Mammary epithelial cell (primary cell): ENCODE measurements at regions of chr21 and their contacts with region 1.

Region 1: GRCh38 chr21:40466893-40467501 is 380.0 kb downstream of the DSCAM start:
- DNase-seq: peak; percentile 8
- H3K4me3 ChIP-seq: no peak overlapping the region
- H3K27ac ChIP-seq: no peak overlapping the region
- H3K4me1 ChIP-seq: no peaks in the 10 kb centered on the region
- H3K27me3 ChIP-seq: no peaks in the 10 kb centered on the region
- CTCF ChIP-seq: peak; percentile 52 to 64

Region 2: GRCh38 chr21:40143822-40144525 is 323.0 kb before region 1 on chr21:
- CTCF ChIA-PET with region 1: no interaction called
- dilution Hi-C with region 1: no loop called
- in situ Hi-C with region 1: no loop called
- intact Hi-C with region 1: loop called (anchors 5 kb)
- DNase-seq: peak; percentile 24
- H3K4me3 ChIP-seq: no peak overlapping the region
- H3K27ac ChIP-seq: no peak overlapping the region
- H3K4me1 ChIP-seq: no peaks in the 10 kb centered on the region
- H3K27me3 ChIP-seq: no peaks in the 10 kb centered on the region
- CTCF ChIP-seq: peak; percentile 63

Region 3: GRCh38 chr21:40678681-40679284 is 211.8 kb after region 1 on chr21:
- CTCF ChIA-PET with region 1: no interaction called
- dilution Hi-C with region 1: no loop called
- in situ Hi-C with region 1: no loop called
- intact Hi-C with region 1: loop called (anchors 5 kb)
- DNase-seq: peak; percentile 53
- H3K4me3 ChIP-seq: peak overlapping the region; percentile 31 to 55 (median 53)
- H3K27ac ChIP-seq: peak overlapping the region; percentile 9
- H3K4me1 ChIP-seq: peaks cover 4% of the 10 kb centered on the region
- H3K27me3 ChIP-seq: no peaks in the 10 kb centered on the region
- CTCF ChIP-seq: no peak